Posterior vena cava (tissue), 2 donors: ENCODE measurements at regions of chr3 and their contacts with region 1.

Region 1: GRCh38 chr3:31227131-31227562 is 305.6 kb upstream of the STT3B start:
- DNase-seq: no peak

Region 2: DNA sequence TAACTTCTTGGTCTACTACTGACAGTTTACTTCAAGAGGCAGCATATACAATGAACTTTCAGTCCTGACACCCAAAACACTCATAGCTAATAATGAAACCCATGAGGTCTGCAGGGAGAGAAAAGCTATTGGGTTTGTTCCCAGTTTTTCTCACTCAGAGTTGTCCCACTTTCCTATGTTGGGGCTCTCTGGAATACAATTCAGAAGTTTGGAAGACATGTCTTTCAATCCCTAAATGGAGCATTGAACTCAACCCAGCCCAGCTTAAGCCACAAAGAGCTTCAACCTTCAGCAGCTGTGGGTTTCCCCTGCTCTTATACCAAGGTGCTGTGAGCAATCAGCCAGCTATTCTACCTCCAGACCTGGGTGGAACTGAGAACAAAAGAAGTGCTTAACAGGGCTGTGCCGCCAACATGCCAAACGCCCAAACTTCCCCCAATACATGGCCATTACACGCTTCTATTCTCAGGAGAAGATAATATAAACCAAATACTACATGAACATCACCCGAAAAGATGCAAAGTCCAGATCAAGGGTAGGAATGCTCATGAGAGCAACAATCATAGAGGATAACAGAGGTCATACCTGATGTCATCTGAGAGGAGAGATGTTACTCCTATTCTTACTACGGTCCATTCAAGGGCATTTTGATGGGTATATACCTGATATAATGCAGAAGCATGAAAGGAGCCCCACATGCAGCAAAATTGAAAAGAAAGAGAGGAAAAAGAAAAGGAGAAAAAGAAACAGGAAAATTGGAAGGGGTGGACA is 751.9 kb before region 1 on chr3:
- intact Hi-C with region 1: no loop called
- DNase-seq: no peak

Region 3: GRCh38 chr3:30659270-30660130 is 567.6 kb before region 1 on chr3:
- intact Hi-C with region 1: loop called in 1 of 2 experiments (anchors 5 kb)
- DNase-seq: no peak